GM12878 (cell line): ENCODE measurements at regions of chr7 and their contacts with region 1.

Region 1: DNA sequence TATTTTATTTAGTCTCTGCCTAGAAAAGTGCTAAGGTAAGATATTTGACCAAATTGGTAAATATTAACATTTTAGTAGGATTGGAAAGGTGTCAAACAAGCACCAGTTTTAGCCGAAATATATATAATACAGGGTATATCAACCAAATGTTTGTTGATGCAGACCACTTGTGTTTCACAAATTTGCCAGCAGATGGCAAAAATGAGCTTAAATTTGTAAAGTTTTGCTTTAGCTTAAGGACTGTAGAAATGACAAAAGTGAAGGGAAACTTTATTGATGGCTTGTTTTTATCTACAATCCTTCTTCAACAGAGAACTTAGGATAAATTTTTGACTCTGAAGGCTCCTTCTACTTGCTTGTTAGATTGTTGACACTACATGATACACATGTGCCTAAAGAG is 4.8 kb upstream of the POLR1F start:
- DNase-seq: peak; percentile 8
- ATAC-seq: peak; percentile 38
- H3K4me3 ChIP-seq: no peak overlapping the region
- H3K27ac ChIP-seq: no peak overlapping the region
- H3K4me1 ChIP-seq: no peaks in the 10 kb centered on the region
- H3K27me3 ChIP-seq: no peaks in the 10 kb centered on the region; a peak in 1 of 4 replicates
- CTCF ChIP-seq: peak; percentile 46 to 59 (median 49); a peak in 5 of 6 replicates
- EP300 ChIP-seq: no peak
- POLR2A ChIP-seq: no peak
- RAD21 ChIP-seq: peak; percentile 48; the same call in 1 of the 2 replicates

Region 2: DNA sequence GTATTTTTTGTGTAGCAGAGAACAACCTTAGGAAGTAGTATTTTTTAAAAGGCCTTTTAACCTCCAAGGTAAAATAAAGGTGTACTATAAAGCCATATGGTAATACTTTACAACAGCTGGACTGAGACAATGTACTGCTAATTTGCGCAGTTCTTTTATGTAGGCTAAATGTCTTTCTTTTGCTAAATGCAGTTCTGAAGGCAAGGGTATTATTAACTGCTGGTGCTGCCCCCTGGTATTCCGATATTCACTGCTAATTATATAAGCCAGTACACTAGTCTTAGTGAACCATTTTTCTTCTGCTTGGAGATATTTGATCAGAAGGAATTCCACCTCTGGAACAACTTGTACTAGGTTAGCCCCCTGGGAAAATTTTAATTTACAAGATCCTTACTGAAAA is 296.4 kb before region 1 on chr7:
- CTCF ChIA-PET with region 1: no interaction called
- POLR2A ChIA-PET with region 1: no interaction called
- RAD21 ChIA-PET with region 1: no interaction called
- SMC1A ChIA-PET with region 1: no interaction called
- in situ Hi-C with region 1: no loop called
- intact Hi-C with region 1: no loop called
- DNase-seq: no peak
- ATAC-seq: no peak
- H3K4me3 ChIP-seq: no peak overlapping the region
- H3K27ac ChIP-seq: no peak overlapping the region
- H3K4me1 ChIP-seq: no peaks in the 10 kb centered on the region
- H3K27me3 ChIP-seq: no peaks in the 10 kb centered on the region
- CTCF ChIP-seq: no peak
- EP300 ChIP-seq: no peak
- POLR2A ChIP-seq: no peak
- RAD21 ChIP-seq: no peak

Region 3: DNA sequence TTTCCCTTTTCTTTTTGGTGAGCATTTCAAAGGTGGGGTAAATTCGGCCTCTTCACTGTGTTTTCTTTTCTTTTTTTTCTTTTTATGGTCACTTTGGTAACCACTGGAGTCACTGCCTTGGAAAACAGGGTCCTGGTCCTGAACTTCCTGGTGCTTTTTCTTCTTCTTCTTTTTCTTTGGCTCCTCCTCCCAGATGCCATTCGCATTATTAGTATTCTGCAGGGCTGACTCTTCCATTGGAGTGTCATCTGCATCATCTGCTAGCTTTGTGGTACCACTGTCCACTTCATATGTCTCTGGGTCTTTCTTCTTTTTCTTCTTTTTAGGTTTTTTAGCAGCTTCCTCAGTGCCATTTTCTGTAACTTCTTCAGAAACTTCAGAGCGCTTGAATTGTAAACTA is 15.3 kb before region 1 on chr7:
- CTCF ChIA-PET with region 1: interaction called, 24 read pairs
- POLR2A ChIA-PET with region 1: no interaction called
- RAD21 ChIA-PET with region 1: interaction called, 6 read pairs
- SMC1A ChIA-PET with region 1: interaction called, 11 read pairs
- in situ Hi-C with region 1: no loop called
- intact Hi-C with region 1: no loop called
- DNase-seq: no peak
- ATAC-seq: no peak
- H3K4me3 ChIP-seq: no peak overlapping the region
- H3K27ac ChIP-seq: no peak overlapping the region
- H3K4me1 ChIP-seq: no peaks in the 10 kb centered on the region
- H3K27me3 ChIP-seq: no peaks in the 10 kb centered on the region
- CTCF ChIP-seq: no peak
- EP300 ChIP-seq: no peak
- POLR2A ChIP-seq: no peak
- RAD21 ChIP-seq: no peak

Region 4: DNA sequence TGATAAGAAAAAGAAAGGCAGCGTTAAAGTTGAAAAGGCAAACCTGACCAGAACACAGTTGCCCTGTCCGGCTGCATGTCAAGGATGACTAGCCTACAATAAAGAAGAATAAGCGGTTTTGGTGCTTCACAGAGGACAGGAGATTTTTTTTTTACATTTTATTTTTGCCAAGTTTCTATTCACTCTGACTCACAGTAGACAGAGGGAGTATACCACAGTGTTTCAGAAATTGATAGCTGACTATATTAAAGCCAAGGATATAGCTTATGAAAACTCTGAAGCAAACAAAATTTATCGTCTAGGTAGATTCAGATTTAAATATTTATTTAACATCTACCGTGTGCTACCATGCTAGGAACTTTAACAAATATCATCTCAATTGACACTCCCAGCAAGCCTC is 12.1 kb after region 1 on chr7:
- CTCF ChIA-PET with region 1: interaction called, 14 read pairs
- POLR2A ChIA-PET with region 1: interaction called, 3 read pairs
- RAD21 ChIA-PET with region 1: interaction called, 5 read pairs
- SMC1A ChIA-PET with region 1: interaction called, 4 read pairs
- in situ Hi-C with region 1: no loop called
- intact Hi-C with region 1: no loop called
- DNase-seq: no peak
- ATAC-seq: no peak
- H3K4me3 ChIP-seq: no peak overlapping the region
- H3K27ac ChIP-seq: no peak overlapping the region
- H3K4me1 ChIP-seq: no peaks in the 10 kb centered on the region
- H3K27me3 ChIP-seq: no peaks in the 10 kb centered on the region
- CTCF ChIP-seq: no peak
- EP300 ChIP-seq: no peak
- POLR2A ChIP-seq: no peak
- RAD21 ChIP-seq: no peak

Region 5: GRCh38 chr7:19747740-19748339 is 34.2 kb after region 1 on chr7:
- CTCF ChIA-PET with region 1: interaction called, 61 read pairs
- POLR2A ChIA-PET with region 1: no interaction called
- RAD21 ChIA-PET with region 1: interaction called, 23 read pairs
- SMC1A ChIA-PET with region 1: interaction called, 30 read pairs
- in situ Hi-C with region 1: no loop called
- intact Hi-C with region 1: no loop called
- DNase-seq: no peak
- ATAC-seq: peak; percentile 76
- H3K4me3 ChIP-seq: no peak overlapping the region
- H3K27ac ChIP-seq: no peak overlapping the region
- H3K4me1 ChIP-seq: no peaks in the 10 kb centered on the region
- H3K27me3 ChIP-seq: no peaks in the 10 kb centered on the region
- CTCF ChIP-seq: peak; percentile 47 to 61 (median 47); a peak in 5 of 6 replicates
- EP300 ChIP-seq: no peak
- POLR2A ChIP-seq: no peak
- RAD21 ChIP-seq: peak; percentile 63

Region 6: DNA sequence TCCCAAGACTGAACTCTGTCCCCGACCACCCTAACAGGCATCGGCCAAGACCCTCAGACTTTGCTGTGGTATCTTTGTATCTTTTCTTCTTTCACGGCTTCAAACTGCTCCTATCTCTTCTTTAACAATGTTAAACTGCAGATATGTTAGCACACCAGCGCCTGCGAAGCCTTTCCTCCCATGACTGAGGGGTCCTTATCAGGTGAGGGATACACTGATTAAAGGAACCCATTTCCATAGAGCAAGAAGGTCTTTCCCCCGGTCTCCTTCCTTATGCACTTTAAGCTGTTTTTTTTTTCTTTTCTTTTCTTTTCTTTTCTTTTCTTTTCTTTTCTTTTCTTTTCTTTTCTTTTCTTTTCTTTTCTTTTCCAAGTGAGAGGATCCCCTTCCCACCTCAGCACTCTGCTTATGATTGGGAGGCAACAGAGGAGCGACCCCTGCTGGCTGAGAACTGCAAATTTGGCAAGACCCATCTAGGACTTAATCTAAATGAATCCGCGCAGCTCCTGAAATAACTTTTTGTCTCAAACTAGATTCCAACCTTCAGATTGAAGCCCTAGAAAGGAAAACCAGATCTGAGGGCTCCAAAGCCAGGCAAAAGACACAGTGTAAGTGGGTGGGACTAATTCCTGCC is 726.9 kb after region 1 on chr7:
- CTCF ChIA-PET with region 1: interaction called, 10 read pairs
- POLR2A ChIA-PET with region 1: no interaction called
- RAD21 ChIA-PET with region 1: interaction called, 5 read pairs
- SMC1A ChIA-PET with region 1: interaction called, 5 read pairs
- in situ Hi-C with region 1: no loop called
- intact Hi-C with region 1: no loop called
- DNase-seq: no peak
- ATAC-seq: peak; percentile 35; the same call in 1 of the 3 replicates
- H3K4me3 ChIP-seq: no peak overlapping the region
- H3K27ac ChIP-seq: no peak overlapping the region
- H3K4me1 ChIP-seq: peaks cover 15% of the 10 kb centered on the region; the same call in 1 of the 2 replicates
- H3K27me3 ChIP-seq: no peaks in the 10 kb centered on the region
- CTCF ChIP-seq: peak; percentile 34 to 65 (median 58)
- EP300 ChIP-seq: no peak
- POLR2A ChIP-seq: no peak
- RAD21 ChIP-seq: peak; percentile 60

Region 7: DNA sequence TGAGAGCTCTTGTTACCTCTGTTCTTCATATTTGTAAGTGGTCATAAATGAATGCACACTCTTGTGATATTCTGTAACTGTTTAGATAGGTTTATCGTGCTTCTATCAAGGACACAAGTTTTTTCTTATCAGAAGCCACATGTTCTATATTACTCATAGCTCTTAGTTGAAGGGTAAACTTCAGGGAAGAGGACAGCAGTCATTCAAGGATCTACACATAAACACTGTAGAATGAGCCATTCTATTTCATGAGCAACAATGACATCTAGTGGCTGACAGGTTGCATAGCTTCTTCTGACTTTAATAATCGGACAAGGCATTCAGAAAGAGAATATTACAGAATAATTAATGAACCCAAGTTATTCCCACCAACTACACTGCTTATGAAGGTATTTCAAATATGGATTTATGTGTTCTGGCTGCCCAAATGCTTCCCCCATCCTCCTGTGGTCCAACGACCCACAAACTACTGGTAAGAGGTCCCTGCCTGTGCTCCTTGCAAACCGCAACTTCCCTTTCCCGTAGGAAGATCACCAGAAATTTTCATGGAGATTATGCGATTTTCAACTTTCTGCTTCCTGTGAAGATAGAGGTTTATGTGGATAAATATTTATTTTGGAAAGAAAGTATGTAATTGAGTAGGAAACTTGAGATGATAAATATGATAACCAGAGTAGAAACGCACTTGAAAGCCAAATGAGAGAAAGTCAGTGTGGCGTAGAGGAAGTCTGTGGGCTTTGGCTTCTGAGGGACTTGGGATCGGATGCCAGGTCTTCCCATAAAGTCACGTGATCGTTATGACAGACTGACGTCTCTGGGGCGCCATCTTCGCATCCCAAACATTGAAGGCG is 885.0 kb after region 1 on chr7:
- CTCF ChIA-PET with region 1: interaction called, 184 read pairs
- POLR2A ChIA-PET with region 1: interaction called, 3 read pairs
- RAD21 ChIA-PET with region 1: interaction called, 123 read pairs
- SMC1A ChIA-PET with region 1: interaction called, 87 read pairs
- in situ Hi-C with region 1: loop called (anchors 5 kb)
- intact Hi-C with region 1: loop called (anchors 1 kb)
- DNase-seq: peak; percentile 43
- ATAC-seq: peak; percentile 88
- H3K4me3 ChIP-seq: no peak overlapping the region
- H3K27ac ChIP-seq: no peak overlapping the region
- H3K4me1 ChIP-seq: no peaks in the 10 kb centered on the region
- H3K27me3 ChIP-seq: no peaks in the 10 kb centered on the region
- CTCF ChIP-seq: peak; percentile 69 to 91 (median 84)
- EP300 ChIP-seq: no peak
- POLR2A ChIP-seq: no peak
- RAD21 ChIP-seq: peak; percentile 98

Region 8: DNA sequence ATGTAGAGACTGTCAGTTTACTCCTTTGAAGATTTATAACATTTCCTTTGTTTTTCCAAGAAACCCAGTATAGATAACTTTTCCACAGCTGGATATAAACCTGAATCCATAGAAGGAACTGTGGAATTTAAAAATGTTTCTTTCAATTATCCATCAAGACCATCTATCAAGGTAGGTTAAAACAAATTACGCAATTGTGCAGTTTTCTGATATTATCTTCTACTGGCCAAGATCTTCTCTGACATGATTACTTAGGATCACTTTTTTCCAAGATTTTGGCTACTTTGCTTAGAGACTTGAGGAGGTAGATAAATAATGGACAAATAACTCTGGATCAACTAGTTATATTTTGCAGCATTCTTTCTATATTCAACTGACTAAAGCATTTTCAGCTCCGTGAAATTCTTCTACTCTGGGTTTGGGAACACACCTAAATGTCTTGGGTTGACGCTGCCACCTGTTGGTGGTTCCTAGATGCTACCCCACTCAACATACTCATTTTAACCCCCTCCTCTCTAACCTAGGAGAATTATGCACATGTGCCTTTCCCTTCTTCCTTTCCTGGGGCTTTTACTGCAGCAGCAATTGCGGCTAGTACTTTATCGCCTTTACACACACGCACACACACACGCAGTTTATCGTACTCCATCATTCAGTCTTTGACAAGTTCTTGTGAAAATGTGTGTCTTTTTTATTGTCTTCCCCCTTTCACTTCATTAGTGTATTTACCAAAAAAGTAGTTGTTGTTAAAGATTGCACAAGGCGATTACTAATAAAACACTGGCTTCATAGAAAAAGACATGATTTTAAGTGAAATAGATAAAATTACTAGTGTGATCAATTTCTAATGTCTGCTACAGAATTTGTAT is 934.5 kb after region 1 on chr7:
- CTCF ChIA-PET with region 1: interaction called, 21 read pairs
- POLR2A ChIA-PET with region 1: no interaction called
- RAD21 ChIA-PET with region 1: interaction called, 3 read pairs
- SMC1A ChIA-PET with region 1: no interaction called
- in situ Hi-C with region 1: no loop called
- intact Hi-C with region 1: loop called (anchors 5 kb)
- DNase-seq: no peak
- ATAC-seq: peak; percentile 85
- H3K4me3 ChIP-seq: no peak overlapping the region
- H3K27ac ChIP-seq: no peak overlapping the region
- H3K4me1 ChIP-seq: no peaks in the 10 kb centered on the region
- H3K27me3 ChIP-seq: no peaks in the 10 kb centered on the region
- CTCF ChIP-seq: peak; percentile 44 to 54 (median 48); a peak in 5 of 6 replicates
- EP300 ChIP-seq: no peak
- POLR2A ChIP-seq: no peak
- RAD21 ChIP-seq: peak; percentile 31; the same call in 1 of the 2 replicates